Left cardiac atrium (tissue), 4 donors: ENCODE measurements at regions of chr18 and their contacts with region 1.

Region 1: GRCh38 chr18:70288851-70289328 is at the start of gene SOCS6:
- DNase-seq: peak; percentile 74
- ATAC-seq: peak; percentile 73 to 79
- total RNA-seq, gene SOCS6: 15.4 to 16.5 TPM

Region 2: DNA sequence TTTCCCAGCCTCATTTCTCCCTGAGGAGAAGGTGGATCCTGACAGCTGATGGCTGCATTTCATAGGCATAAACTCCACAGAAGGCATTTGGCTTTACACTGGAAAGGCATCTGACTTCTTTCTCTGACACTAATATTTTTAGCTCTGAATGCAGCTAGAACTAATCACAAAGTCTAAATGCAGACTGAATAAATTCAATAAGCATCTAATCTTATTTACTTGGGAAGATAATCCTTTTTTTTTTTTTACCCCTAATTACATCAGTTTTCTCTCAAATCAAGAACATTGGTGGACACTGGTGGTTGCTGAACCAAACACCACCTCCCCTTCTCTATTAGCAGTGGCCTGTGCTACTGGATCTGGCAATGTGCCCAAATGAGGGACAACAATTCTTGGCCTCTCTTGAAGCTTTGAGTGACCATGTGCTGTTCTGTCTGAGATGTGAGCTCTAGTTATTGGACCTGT is 290.3 kb before region 1 on chr18:
- intact Hi-C with region 1: no loop called
- DNase-seq: no peak
- ATAC-seq: peak; percentile 89 to 93

Region 3: DNA sequence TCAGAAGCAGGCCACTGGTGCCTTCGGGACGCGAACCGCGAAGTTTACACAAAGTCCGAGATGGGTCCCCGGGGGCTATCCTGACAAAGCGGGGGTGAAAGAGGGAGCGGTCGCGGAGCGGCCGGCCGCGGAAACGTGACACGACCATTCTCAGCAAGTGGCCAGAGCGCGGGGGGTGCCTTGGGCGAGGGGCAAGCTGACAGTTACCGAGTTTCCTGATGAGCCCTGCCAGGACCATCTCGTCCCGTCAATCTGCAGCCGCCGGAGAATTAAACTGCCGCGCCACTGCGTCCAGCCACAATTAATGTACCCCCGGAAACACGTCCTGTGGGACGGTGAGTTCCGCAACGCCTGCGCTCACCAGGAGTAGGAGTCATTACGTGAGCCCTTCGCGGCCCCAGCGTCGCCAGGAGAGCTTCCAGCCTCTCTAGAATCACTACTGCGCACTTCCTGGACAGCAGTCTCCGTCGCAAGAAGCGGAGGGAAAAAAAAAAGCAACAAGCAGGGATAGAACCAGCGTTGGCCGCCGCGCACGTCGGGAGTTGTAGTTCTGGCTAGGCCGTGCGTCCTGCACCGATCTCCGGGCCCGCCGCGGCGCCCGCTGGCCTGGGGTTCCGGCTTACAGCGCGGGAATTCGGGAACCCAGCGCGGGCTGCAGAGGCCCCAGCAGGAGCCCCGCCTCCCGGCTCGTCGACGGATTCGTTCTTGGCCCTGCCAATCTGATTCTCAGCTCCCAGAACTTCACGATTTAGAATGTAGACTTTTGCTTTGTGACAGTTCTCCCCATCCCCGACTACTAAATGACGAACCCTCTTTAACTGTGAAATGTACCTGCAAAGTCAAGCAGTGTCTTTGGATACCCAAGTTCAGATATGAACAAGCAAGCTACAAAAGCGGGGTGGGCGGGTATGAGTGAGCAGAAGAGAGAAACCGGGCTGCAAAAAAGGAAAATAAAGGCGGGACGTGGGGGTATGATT is 83.2 kb before region 1 on chr18 and contains the start of gene RTTN:
- intact Hi-C with region 1: loop called in 1 of 2 experiments (anchors 5 kb)
- DNase-seq: peak; percentile 96
- ATAC-seq: peak; percentile 100
- total RNA-seq, gene RTTN: 5.4 to 6.5 TPM

Region 4: DNA sequence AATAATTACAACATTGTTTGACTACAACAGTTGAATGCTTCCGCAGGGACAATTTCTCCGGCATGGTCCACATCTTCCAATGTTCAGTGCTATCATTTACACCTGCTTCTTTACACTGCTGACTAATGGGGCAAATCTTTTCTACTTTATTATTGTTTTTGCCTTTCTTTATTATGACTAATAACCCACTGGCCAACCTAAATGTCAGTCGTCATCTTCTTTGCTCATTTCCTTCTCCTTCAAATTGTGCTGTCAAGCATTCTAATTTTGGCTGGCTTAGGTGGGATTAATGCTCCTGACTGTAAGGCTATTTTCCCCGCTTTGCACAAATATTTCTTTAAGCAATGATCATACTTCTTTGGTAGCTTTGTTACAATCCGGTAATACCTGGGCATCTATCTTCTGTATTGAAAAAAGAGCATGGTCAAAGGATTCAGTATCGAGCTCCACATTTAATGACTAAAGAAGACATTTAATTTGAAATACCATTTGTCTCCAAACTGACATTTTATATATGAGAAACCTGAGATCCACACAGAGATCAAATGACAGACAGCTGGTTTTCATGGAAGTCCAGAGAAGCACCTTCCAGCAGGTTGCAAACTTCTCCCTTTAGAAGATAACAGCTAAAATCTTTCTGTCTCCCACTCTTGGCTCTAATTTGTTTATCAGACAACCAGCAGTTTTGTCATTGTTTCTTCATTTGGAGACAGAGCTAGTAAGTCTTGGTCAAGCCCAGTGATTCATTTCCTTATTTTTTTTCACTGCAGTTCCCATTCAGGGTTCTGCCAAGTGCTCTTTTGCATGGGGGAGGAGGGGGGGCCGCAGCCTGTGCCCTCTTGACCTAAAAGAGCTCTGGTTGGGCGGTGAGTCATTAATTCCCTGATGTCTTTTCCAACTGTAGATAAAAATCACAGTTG is 132.8 kb after region 1 on chr18:
- intact Hi-C with region 1: loop called in 1 of 2 experiments (anchors 10 kb)
- DNase-seq: peak; percentile 86
- ATAC-seq: peak; percentile 83 to 95

Region 5: GRCh38 chr18:70553245-70553935 is 264.5 kb after region 1 on chr18:
- intact Hi-C with region 1: no loop called
- DNase-seq: no peak
- ATAC-seq: no peak